RWPE1 (cell line): ENCODE measurements at regions of chr9 and their contacts with region 1.

Region 1: GRCh38 chr9:78707481-78707991 is 410.6 kb downstream of the PSAT1 start:
- DNase-seq: peak; percentile 6
- H3K27ac ChIP-seq: no peak overlapping the region
- CTCF ChIP-seq: no peak

Region 2: GRCh38 chr9:78386773-78387172 is 320.8 kb before region 1 on chr9:
- CTCF ChIA-PET with region 1: no interaction called
- POLR2A ChIA-PET with region 1: no interaction called
- DNase-seq: no peak
- H3K27ac ChIP-seq: no peak overlapping the region
- CTCF ChIP-seq: no peak

Region 3: GRCh38 chr9:79346350-79347020 is 638.9 kb after region 1 on chr9:
- CTCF ChIA-PET with region 1: interaction called, 10 read pairs
- POLR2A ChIA-PET with region 1: no interaction called
- DNase-seq: no peak
- H3K27ac ChIP-seq: no peak overlapping the region
- CTCF ChIP-seq: no peak